ENCODE measurements at regions of chr3 and their contacts with region 1.

Region 1: GRCh38 chr3:72447059-72447946 is 400.9 kb downstream of the SHQ1 start:
- DNase-seq: peak; percentile 97
- ATAC-seq: peak; percentile 96
- H3K4me3 Mint-ChIP-seq: peak overlapping the region; percentile 78
- H3K27ac Mint-ChIP-seq: peak overlapping the region; percentile 31
- H3K4me1 Mint-ChIP-seq: peaks cover 47% of the 10 kb centered on the region
- H3K27me3 Mint-ChIP-seq: peaks cover 17% of the 10 kb centered on the region
- CTCF ChIP-seq: no peak

Region 2: DNA sequence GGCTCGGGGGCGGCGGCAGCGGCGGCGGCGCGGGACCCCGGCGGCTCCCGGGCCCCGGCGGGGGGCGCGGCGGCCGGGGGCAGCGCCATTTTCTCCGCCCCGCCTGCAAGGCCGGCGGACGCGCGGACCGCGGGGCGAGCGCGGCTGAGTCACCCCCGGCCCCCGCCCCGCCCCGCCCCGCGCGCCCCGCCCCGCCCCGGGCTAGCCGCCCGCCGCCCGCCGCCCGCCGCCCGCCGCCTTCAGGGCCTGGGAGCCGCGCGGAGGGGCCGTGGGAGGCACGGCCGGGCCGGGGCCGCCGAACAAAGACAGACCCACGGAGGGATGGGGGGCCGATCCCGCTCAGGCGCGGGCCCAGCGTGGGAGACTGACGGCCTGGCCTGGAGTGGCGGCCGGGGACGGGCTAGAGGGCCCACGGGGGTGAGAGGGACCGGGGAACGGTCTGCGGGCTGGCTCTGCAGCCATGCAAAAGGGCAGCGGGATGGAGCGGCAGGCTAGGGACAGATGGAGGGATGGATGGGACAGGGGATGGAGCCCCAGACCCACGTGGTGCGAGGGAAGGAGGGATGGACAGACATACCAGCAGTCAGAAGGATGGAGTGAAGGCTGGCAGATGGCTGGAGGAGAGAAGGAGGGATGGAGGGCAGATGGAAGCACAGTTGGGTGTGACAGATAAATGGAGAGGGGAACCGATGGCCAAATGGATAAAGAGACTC is 721.9 kb before region 1 on chr3 and contains the start of gene EIF4E3:
- CTCF ChIA-PET with region 1: no interaction called
- POLR2A ChIA-PET with region 1: no interaction called
- intact Hi-C with region 1: loop called (anchors 10 kb)
- DNase-seq: peak; percentile 53
- ATAC-seq: peak; percentile 72
- H3K4me3 Mint-ChIP-seq: peak within 1 kb of the TSS; percentile 86
- H3K27ac Mint-ChIP-seq: peak within 1 kb of the TSS; percentile 41
- H3K4me1 Mint-ChIP-seq: peaks cover 37% of the 10 kb centered on the region
- H3K27me3 Mint-ChIP-seq: peaks cover 17% of the 10 kb centered on the region
- CTCF ChIP-seq: no peak
- total RNA-seq, gene EIF4E3: 1.8 and 2.0 TPM in 2 replicates

Region 3: DNA sequence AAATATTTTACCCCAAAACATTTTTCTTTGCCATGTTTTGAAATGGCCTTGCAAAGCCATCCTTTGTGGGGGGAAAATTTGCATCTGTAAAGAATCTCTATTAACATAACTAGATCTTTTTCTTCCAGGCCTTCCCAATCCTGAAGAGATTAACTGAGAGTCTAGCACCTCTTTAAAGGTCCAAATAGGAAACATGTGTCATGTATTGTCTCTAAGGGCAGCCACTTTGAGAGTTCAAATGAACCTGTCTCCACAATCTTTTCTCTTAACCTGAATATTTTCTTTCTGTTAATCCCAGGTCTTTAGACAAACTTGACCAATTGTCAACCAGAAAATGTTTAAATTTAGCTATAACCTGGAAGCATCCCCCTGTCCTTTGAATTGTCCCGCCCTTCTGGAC is 425.8 kb before region 1 on chr3:
- CTCF ChIA-PET with region 1: no interaction called
- POLR2A ChIA-PET with region 1: no interaction called
- intact Hi-C with region 1: no loop called
- DNase-seq: no peak
- ATAC-seq: no peak
- H3K4me3 Mint-ChIP-seq: no peak overlapping the region
- H3K27ac Mint-ChIP-seq: no peak overlapping the region
- H3K4me1 Mint-ChIP-seq: no peaks in the 10 kb centered on the region
- H3K27me3 Mint-ChIP-seq: peaks cover 6% of the 10 kb centered on the region
- CTCF ChIP-seq: no peak

Region 4: DNA sequence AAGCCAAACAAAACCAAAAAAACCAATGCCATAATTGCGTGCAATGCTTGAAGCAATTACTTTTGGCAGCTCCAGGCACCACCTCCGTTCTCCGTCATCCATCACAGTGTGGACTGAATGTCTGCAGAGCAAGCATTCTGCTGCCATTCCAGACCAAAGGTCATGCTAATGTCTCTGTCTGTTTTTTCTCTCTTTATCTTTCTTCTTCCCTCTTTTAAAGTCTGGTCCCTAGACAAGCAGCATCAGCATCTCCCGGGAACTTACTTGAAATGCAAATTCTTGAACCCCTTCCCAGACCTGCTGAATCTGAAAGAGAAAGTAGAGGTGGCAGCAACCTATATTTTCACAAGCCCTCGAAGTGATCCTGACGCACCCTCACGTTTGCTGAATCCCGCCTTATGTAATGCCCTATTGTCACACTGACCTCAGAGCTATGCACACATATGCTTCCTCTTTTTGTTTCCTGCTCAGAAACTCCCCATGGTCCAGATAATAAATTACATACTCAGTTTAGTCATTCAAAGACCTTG is 365.1 kb before region 1 on chr3:
- CTCF ChIA-PET with region 1: no interaction called
- POLR2A ChIA-PET with region 1: no interaction called
- intact Hi-C with region 1: loop called (anchors 5 kb)
- DNase-seq: no peak
- ATAC-seq: peak; percentile 81
- H3K4me3 Mint-ChIP-seq: peak overlapping the region; percentile 72
- H3K27ac Mint-ChIP-seq: peak overlapping the region; percentile 71
- H3K4me1 Mint-ChIP-seq: peaks cover 71% of the 10 kb centered on the region
- H3K27me3 Mint-ChIP-seq: peaks cover 12% of the 10 kb centered on the region
- CTCF ChIP-seq: no peak

Region 5: DNA sequence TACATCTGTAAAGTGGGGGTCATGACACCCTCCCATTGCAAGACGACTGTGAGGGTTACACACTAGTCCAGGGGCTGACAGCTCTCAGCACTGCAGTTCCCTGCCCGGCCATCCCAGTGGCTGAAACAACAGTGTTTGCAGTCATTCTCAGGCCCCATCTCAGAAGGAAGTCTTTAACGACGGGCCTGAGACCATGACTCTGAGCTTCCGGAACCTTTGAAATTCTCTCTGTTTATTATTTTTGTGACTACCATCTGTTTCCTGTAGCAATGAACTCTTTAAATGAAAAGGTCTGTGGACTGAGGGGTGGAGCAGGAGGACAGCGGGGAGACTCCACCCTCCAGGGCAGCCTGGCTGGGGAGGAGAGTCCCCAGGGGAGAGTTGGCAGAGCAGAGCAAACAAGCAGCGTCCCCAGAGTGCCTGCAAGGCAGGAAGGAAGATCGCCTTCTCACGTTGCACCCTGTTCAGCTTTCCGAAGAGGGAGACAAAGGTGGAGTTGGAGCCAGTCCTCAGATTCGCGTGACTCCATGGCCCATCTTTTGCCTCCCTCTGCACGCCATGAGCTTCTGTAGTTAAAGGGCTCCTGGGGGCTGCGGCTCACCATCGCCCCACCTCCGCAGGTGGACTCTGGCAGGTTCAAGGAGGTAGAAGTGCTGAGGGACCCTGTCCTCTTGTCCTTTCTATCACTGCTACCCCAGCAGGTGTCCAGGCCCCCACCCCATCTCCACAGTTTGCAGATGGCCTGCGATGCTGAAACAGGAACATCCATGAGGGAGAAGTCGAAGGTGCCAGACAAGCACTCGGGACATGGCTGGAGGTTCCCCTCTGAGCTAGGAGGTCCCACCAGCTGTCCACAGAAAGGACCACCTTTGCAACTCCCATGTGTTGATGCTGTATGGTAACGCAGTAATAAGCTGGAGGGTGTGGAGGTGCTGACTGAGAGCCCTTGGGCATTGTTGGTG is 136.6 kb before region 1 on chr3:
- CTCF ChIA-PET with region 1: no interaction called
- POLR2A ChIA-PET with region 1: interaction called, 6 read pairs
- intact Hi-C with region 1: loop called (anchors 5 kb)
- DNase-seq: peak; percentile 45
- ATAC-seq: peak; percentile 98
- H3K4me3 Mint-ChIP-seq: peak overlapping the region; percentile 74
- H3K27ac Mint-ChIP-seq: peak overlapping the region; percentile 76
- H3K4me1 Mint-ChIP-seq: peaks cover 47% of the 10 kb centered on the region
- H3K27me3 Mint-ChIP-seq: no peaks in the 10 kb centered on the region
- CTCF ChIP-seq: no peak

Region 6: GRCh38 chr3:72496051-72496670 is 48.9 kb after region 1 on chr3:
- CTCF ChIA-PET with region 1: no interaction called
- POLR2A ChIA-PET with region 1: interaction called, 12 read pairs
- intact Hi-C with region 1: no loop called
- DNase-seq: no peak
- ATAC-seq: peak; percentile 77
- H3K4me3 Mint-ChIP-seq: peak overlapping the region; percentile 25
- H3K27ac Mint-ChIP-seq: peak overlapping the region; percentile 59
- H3K4me1 Mint-ChIP-seq: peaks cover 21% of the 10 kb centered on the region
- H3K27me3 Mint-ChIP-seq: peaks cover 7% of the 10 kb centered on the region
- CTCF ChIP-seq: no peak

Region 7: GRCh38 chr3:72756900-72757299 is 309.6 kb after region 1 on chr3:
- CTCF ChIA-PET with region 1: no interaction called
- POLR2A ChIA-PET with region 1: no interaction called
- intact Hi-C with region 1: loop called (anchors 5 kb)
- DNase-seq: no peak
- ATAC-seq: peak; percentile 99
- H3K4me3 Mint-ChIP-seq: peak overlapping the region; percentile 67
- H3K27ac Mint-ChIP-seq: no peak overlapping the region
- H3K4me1 Mint-ChIP-seq: peaks cover 32% of the 10 kb centered on the region
- H3K27me3 Mint-ChIP-seq: peaks cover 33% of the 10 kb centered on the region
- CTCF ChIP-seq: no peak

Region 8: DNA sequence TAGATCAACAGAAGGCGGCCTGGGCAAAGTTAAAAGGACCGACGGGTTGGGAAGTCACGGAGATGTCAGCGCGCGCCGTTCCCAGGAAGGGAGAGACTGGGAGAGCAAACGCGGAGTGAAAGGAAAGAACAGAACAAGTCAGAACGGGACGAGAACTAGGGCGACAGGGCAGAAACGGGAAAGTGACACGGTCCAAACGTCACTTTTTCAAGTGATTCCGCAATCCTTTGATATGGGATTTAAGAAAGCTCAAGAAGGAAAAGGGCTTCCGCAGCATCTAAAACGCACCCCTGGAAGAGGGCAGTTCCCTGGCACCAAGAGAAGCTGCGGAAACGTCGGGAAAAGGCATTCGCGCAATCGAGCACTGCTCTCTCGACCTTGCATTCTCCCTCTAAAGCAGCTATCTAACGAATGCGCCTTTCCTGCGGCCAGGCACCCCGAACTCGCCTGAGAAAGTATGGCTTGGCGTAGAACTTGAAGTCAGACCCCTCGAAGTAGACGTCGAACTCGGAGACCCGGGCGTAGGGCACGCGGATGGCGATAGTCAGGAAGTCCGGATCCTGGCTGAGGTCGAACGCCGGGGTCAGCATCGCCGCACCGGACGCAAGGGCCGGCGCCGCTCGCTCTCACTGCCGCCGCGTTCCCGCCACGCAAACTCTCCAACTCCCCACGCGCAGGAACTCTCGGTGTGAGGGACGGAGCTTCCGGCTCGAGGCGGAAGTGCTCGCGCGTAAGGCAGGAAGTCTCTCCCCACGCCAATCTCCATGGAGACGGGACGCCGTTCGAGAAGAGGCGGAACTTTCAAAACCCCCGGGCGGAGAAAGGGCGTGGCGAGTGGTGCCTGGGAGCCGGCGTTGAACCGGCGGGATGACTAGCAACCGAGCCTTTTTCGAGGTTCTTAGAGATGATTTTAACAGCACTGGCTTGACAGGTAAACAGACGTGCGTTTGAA is 400.7 kb after region 1 on chr3 and contains the start of gene SHQ1:
- CTCF ChIA-PET with region 1: no interaction called
- POLR2A ChIA-PET with region 1: no interaction called
- intact Hi-C with region 1: loop called (anchors 1 kb)
- DNase-seq: peak; percentile 84
- ATAC-seq: peak; percentile 95
- H3K4me3 Mint-ChIP-seq: peak within 1 kb of the TSS; percentile 92
- H3K27ac Mint-ChIP-seq: peak within 1 kb of the TSS; percentile 79
- H3K4me1 Mint-ChIP-seq: peaks cover 45% of the 10 kb centered on the region
- H3K27me3 Mint-ChIP-seq: no peaks in the 10 kb centered on the region
- CTCF ChIP-seq: no peak
- total RNA-seq, gene SHQ1: 21.2 and 25.3 TPM in 2 replicates